ENCODE measurements at regions of chr19 and their contacts with region 1.

Region 1: GRCh38 chr19:44800461-44800860 is 8.4 kb upstream of the BCAM start:
- DNase-seq: peak; percentile 86
- H3K4me3 ChIP-seq: no peak overlapping the region
- H3K27ac ChIP-seq: no peak overlapping the region
- H3K4me1 ChIP-seq: peaks cover 0 to 4% of the 10 kb centered on the region in 2 donors
- H3K27me3 ChIP-seq: no peaks in the 10 kb centered on the region
- CTCF ChIP-seq: peak; percentile 93 to 98 (median 95)
- POLR2A ChIP-seq: no peak

Region 2: GRCh38 chr19:44746946-44747738 is 53.3 kb before region 1 on chr19:
- intact Hi-C with region 1: no loop called
- DNase-seq: peak; percentile 96 to 97
- H3K4me3 ChIP-seq: peak overlapping the region; percentile 48 to 76
- H3K27ac ChIP-seq: peak overlapping the region; percentile 91 to 94
- H3K4me1 ChIP-seq: peaks cover 5 to 8% of the 10 kb centered on the region in 2 donors
- H3K27me3 ChIP-seq: no peaks in the 10 kb centered on the region
- CTCF ChIP-seq: peak in 1 of 4 experiments; percentile 1
- POLR2A ChIP-seq: peak; percentile 35 to 64

Region 3: DNA sequence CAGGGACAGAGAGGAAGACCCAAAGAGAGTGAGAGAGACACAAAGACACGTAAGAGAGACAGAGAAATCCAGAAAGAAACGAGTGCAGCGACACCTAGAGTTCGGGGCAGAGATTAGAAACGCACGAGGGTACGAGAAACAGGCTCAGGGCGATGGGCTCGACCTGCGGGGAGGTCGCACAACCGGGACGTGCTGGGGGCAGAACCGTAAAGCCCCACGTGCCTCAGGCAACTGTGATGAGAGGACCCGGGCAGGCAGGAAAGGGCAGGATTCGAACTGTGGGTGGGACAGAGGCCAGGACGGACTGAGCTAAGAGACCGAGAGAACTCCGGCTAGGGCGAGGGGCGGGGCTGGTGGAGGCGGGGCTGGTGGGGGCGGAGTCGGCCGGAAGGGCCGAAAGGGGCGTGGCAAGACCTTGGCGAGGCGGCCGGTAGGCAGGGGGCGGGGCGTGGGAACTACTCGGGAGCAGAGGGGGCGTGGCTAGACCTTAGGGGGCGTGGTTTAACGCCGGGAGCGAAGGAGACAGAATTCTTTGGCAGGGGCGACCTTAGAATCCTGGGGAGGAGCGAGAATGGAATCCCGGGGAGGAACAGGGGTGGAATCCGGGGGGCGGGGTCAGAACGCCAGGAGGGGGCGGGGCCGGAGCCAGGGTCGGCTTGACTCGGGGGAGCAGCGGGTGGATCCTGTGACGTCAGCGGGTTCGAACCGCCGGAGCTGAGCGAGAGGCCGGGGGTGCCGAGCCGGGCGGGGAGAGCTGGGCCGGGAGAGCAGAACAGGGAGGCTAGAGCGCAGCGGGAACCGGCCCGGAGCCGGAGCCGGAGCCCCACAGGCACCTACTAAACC is 45.4 kb after region 1 on chr19 and contains the start of gene NECTIN2:
- intact Hi-C with region 1: loop called (anchors 5 kb)
- DNase-seq: peak; percentile 100
- H3K4me3 ChIP-seq: peak within 1 kb of the TSS; percentile 69 to 100
- H3K27ac ChIP-seq: peak within 1 kb of the TSS; percentile 96 to 97
- H3K4me1 ChIP-seq: peaks cover 3 to 12% of the 10 kb centered on the region in 2 donors
- H3K27me3 ChIP-seq: no peaks in the 10 kb centered on the region
- CTCF ChIP-seq: peak; percentile 51 to 85 (median 80)
- POLR2A ChIP-seq: peak; percentile 91 to 97
- total RNA-seq, gene NECTIN2: 14.1 to 106 (median 86.1) TPM